SK-N-SH (cell line): ENCODE measurements at regions of chr11 and their contacts with region 1.

Region 1: GRCh38 chr11:2532704-2533586 is 88.1 kb downstream of the KCNQ1 start:
- DNase-seq: peak; percentile 90
- H3K4me3 ChIP-seq: peak overlapping the region in 1 of 2 experiments; percentile 34; a peak in 1 of 4 replicates
- H3K27ac ChIP-seq: peak overlapping the region in 1 of 2 experiments; percentile 62; a peak in 2 of 4 replicates
- H3K4me1 ChIP-seq: peaks cover 5 to 9% of the 10 kb centered on the region in 2 experiments; a peak in 2 of 4 replicates
- H3K27me3 ChIP-seq: no peaks in the 10 kb centered on the region
- CTCF ChIP-seq: peak; percentile 98
- EP300 ChIP-seq: no peak
- RAD21 ChIP-seq: peak; percentile 97

Region 2: GRCh38 chr11:2196970-2197770 is 335.8 kb before region 1 on chr11:
- CTCF ChIA-PET with region 1: interaction called, 22 read pairs
- POLR2A ChIA-PET with region 1: no interaction called
- DNase-seq: peak; percentile 91
- H3K4me3 ChIP-seq: no peak overlapping the region
- H3K27ac ChIP-seq: no peak overlapping the region
- H3K4me1 ChIP-seq: peaks cover 0 to 28% of the 10 kb centered on the region in 2 experiments; a peak in 1 of 4 replicates
- H3K27me3 ChIP-seq: no peaks in the 10 kb centered on the region
- CTCF ChIP-seq: peak; percentile 60
- EP300 ChIP-seq: no peak
- RAD21 ChIP-seq: peak; percentile 91

Region 3: GRCh38 chr11:2325719-2326118 is 207.2 kb before region 1 on chr11:
- CTCF ChIA-PET with region 1: no interaction called
- POLR2A ChIA-PET with region 1: no interaction called
- DNase-seq: no peak
- H3K4me3 ChIP-seq: no peak overlapping the region
- H3K27ac ChIP-seq: no peak overlapping the region
- H3K4me1 ChIP-seq: no peaks in the 10 kb centered on the region
- H3K27me3 ChIP-seq: no peaks in the 10 kb centered on the region
- CTCF ChIP-seq: no peak
- EP300 ChIP-seq: no peak
- RAD21 ChIP-seq: no peak

Region 4: DNA sequence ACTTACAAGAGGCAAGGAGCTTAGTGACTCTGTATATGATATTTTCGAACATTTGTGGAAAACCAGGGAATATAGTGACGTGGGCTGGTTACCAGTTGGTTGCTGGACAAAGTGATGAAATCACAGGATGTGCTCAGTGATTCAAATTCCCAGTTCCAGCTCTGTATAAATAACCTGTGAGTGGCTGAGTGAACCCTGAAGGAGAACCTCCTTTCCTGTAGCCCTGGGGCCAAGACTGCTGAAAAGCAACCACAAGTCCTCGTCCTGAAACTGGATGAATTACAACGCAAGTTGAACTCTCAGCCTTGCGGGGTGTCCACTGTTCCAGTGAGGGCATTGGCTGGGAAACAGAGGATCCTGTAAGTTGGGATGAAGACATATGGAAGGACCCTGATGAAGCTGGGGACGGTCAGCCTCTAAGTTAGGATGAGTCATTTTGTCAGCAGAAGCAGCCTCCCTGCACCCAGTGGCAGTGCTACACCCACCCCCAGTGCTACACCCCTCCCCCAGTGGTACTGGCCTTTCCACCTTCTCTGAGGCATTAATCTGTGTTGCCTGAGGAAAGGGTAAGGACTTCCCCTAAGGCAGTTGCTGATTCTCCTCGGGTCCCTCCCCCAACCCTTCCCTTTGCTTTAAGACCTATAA is 177.8 kb before region 1 on chr11:
- CTCF ChIA-PET with region 1: no interaction called
- POLR2A ChIA-PET with region 1: no interaction called
- DNase-seq: no peak
- H3K4me3 ChIP-seq: no peak overlapping the region
- H3K27ac ChIP-seq: no peak overlapping the region
- H3K4me1 ChIP-seq: no peaks in the 10 kb centered on the region
- H3K27me3 ChIP-seq: no peaks in the 10 kb centered on the region
- CTCF ChIP-seq: no peak
- EP300 ChIP-seq: no peak
- RAD21 ChIP-seq: no peak

Region 5: DNA sequence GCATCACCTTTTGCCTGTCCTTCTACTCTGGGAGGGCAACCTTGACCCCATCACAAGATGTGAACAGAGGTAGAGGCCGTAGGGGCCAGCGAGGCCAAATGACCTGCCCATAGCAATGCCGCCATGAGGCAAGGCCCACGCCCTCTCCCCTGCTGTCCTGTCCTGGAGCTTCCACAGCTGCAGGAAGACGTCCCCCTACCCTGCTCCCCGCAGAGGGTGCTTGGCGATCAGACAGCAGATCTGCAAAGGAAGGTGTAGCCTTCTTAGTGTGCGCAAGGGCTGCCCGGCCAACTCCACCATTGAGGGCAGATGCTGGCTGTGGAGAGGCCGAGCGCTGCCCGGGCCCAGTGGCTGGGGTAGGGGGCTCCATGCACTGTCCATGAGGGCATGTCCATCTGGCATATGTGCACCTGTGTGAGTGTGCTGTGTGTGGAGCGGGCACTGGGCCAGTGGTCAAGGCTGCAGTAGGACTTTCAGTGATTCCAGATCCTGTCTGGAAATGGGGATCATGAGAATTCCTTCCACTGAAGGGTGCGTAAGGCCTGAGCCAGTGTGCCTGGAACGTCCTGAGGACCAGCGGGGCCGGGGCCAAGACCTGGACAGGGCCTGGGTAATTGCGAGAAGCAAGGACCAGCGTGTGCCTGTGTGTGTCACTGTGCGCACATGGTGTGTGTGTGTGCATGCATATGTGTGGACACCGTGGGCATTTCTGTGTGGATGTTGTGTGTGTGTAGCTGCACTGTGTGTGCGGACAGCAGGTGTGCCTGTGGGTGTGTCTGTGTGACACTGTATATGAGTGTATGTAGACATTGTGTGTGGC is 99.6 kb before region 1 on chr11:
- CTCF ChIA-PET with region 1: interaction called, 461 read pairs
- POLR2A ChIA-PET with region 1: no interaction called
- DNase-seq: no peak
- H3K4me3 ChIP-seq: no peak overlapping the region
- H3K27ac ChIP-seq: no peak overlapping the region
- H3K4me1 ChIP-seq: no peaks in the 10 kb centered on the region
- H3K27me3 ChIP-seq: no peaks in the 10 kb centered on the region
- CTCF ChIP-seq: no peak
- EP300 ChIP-seq: no peak
- RAD21 ChIP-seq: no peak

Region 6: DNA sequence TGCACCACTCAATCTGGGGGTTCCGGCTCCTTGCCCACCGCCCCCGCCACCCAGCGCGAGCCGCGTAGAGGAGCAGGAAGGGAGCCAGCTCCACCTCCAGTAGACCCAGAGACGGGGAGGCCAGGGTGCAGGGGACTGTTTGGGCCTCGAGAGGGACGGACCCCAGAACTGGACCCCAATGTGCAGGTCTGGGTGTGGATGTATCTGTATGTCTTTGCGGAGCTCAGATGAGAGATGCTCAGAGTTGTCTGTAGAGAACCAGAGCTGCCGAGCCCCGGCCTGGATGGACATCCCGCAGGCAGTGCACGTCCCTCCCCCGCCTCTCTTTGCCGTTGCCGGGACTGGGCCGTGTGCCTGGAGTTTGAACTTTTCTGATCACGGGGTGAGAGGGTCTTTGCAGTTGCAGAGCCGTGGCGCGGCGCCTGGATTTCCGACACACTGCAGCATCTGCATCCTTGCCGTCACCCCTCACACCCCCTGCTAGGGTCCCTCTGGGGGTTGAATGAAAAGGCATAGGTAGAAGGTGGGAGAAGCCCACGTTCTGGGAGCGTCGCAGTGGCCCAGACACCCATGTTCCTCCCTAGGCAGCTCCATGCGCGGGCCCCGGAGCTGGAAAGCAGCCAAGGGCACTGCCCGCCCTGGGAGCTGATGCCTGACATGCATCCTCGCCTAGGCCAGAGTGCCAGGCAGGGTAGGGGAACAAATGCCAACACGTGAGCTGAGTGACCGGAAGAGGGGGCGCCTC is 17.1 kb after region 1 on chr11:
- CTCF ChIA-PET with region 1: interaction called, 13 read pairs
- POLR2A ChIA-PET with region 1: no interaction called
- DNase-seq: no peak
- H3K4me3 ChIP-seq: no peak overlapping the region
- H3K27ac ChIP-seq: no peak overlapping the region
- H3K4me1 ChIP-seq: no peaks in the 10 kb centered on the region
- H3K27me3 ChIP-seq: no peaks in the 10 kb centered on the region
- CTCF ChIP-seq: no peak
- EP300 ChIP-seq: no peak
- RAD21 ChIP-seq: no peak

Region 7: GRCh38 chr11:2691991-2692875 is 159.3 kb after region 1 on chr11:
- CTCF ChIA-PET with region 1: interaction called, 52 read pairs
- POLR2A ChIA-PET with region 1: no interaction called
- DNase-seq: no peak
- H3K4me3 ChIP-seq: no peak overlapping the region
- H3K27ac ChIP-seq: no peak overlapping the region
- H3K4me1 ChIP-seq: peaks cover 0 to 66% of the 10 kb centered on the region in 2 experiments; a peak in 1 of 4 replicates
- H3K27me3 ChIP-seq: no peaks in the 10 kb centered on the region
- CTCF ChIP-seq: peak; percentile 18; the same call in 1 of the 2 replicates
- EP300 ChIP-seq: no peak
- RAD21 ChIP-seq: peak; percentile 18; the same call in 1 of the 2 replicates

Region 8: GRCh38 chr11:2877474-2877873 is 344.5 kb after region 1 on chr11:
- CTCF ChIA-PET with region 1: interaction called, 1,016 read pairs
- POLR2A ChIA-PET with region 1: no interaction called
- DNase-seq: no peak
- H3K4me3 ChIP-seq: no peak overlapping the region
- H3K27ac ChIP-seq: no peak overlapping the region
- H3K4me1 ChIP-seq: peaks cover 0 to 19% of the 10 kb centered on the region in 2 experiments; a peak in 1 of 4 replicates
- H3K27me3 ChIP-seq: no peaks in the 10 kb centered on the region
- CTCF ChIP-seq: no peak
- EP300 ChIP-seq: no peak
- RAD21 ChIP-seq: no peak

Region 9: GRCh38 chr11:3091791-3092602 is 559.1 kb after region 1 on chr11:
- CTCF ChIA-PET with region 1: interaction called, 14 read pairs
- POLR2A ChIA-PET with region 1: no interaction called
- DNase-seq: peak; percentile 93
- H3K4me3 ChIP-seq: no peak overlapping the region; a peak in 1 of 4 replicates
- H3K27ac ChIP-seq: no peak overlapping the region
- H3K4me1 ChIP-seq: peaks cover 0 to 9% of the 10 kb centered on the region in 2 experiments; a peak in 2 of 4 replicates
- H3K27me3 ChIP-seq: no peaks in the 10 kb centered on the region
- CTCF ChIP-seq: peak; percentile 95
- EP300 ChIP-seq: no peak
- RAD21 ChIP-seq: peak; percentile 84